PC-3 (cell line): ENCODE measurements at regions of chr12 and their contacts with region 1.

Region 1: GRCh38 chr12:118183705-118184104 is 47.8 kb downstream of the PEBP1 start:
- DNase-seq: peak; percentile 30
- ATAC-seq: no peak
- H3K4me3 ChIP-seq: no peak overlapping the region
- H3K27ac ChIP-seq: no peak overlapping the region
- H3K4me1 ChIP-seq: peaks cover 8% of the 10 kb centered on the region; the same call in 1 of the 2 replicates
- H3K27me3 ChIP-seq: no peaks in the 10 kb centered on the region
- CTCF ChIP-seq: no peak

Region 2: GRCh38 chr12:118164798-118165486 is 18.8 kb before region 1 on chr12:
- CTCF ChIA-PET with region 1: interaction called, 3 read pairs
- POLR2A ChIA-PET with region 1: no interaction called
- intact Hi-C with region 1: loop called (anchors 2 kb)
- DNase-seq: peak; percentile 65
- ATAC-seq: peak; percentile 78
- H3K4me3 ChIP-seq: no peak overlapping the region
- H3K27ac ChIP-seq: no peak overlapping the region
- H3K4me1 ChIP-seq: no peaks in the 10 kb centered on the region
- H3K27me3 ChIP-seq: no peaks in the 10 kb centered on the region
- CTCF ChIP-seq: peak; percentile 89

Region 3: DNA sequence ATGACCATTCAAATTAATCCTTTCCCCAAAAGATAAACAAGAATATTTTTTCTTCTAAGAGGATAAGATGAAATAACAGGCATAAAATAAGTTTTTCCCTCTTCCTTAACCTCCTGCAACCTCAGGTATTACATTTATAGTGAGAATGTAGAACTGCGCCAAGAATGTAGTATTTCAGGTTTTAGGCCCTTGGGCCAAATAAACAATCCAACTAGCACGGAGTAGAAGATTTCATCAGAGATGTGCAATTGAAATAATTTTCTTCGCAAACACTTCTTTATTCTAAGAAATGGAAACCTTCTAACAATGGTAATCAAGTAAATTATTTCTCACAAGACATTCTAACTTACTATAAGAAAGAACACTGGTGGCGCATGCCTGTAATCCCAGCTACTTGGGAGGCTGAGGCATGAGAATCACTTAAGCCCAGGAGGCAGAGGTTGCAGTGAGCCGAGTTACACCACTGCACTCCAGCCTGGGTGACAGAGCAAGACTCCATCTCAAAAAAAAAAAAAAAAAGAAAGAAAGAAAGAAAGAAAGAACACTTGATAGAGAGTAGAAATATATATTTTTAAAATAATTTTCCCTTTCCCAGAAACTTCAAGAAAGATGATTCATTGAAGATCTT is 88.2 kb after region 1 on chr12:
- CTCF ChIA-PET with region 1: no interaction called
- POLR2A ChIA-PET with region 1: no interaction called
- intact Hi-C with region 1: loop called (anchors 5 kb)
- DNase-seq: peak; percentile 98
- ATAC-seq: peak; percentile 90
- H3K4me3 ChIP-seq: peak overlapping the region; percentile 32; the same call in 1 of the 2 replicates
- H3K27ac ChIP-seq: peak overlapping the region; percentile 32
- H3K4me1 ChIP-seq: peaks cover 18% of the 10 kb centered on the region
- H3K27me3 ChIP-seq: no peaks in the 10 kb centered on the region
- CTCF ChIP-seq: no peak

Region 4: GRCh38 chr12:118307069-118307954 is 123.6 kb after region 1 on chr12:
- CTCF ChIA-PET with region 1: interaction called, 5 read pairs
- POLR2A ChIA-PET with region 1: interaction called, 3 read pairs
- intact Hi-C with region 1: loop called (anchors 2 kb)
- DNase-seq: peak; percentile 92
- ATAC-seq: peak; percentile 93
- H3K4me3 ChIP-seq: peak overlapping the region; percentile 46
- H3K27ac ChIP-seq: peak overlapping the region; percentile 65
- H3K4me1 ChIP-seq: peaks cover 46% of the 10 kb centered on the region
- H3K27me3 ChIP-seq: no peaks in the 10 kb centered on the region
- CTCF ChIP-seq: no peak